ENCODE measurements at regions of chr6 and their contacts with region 1.

Region 1: DNA sequence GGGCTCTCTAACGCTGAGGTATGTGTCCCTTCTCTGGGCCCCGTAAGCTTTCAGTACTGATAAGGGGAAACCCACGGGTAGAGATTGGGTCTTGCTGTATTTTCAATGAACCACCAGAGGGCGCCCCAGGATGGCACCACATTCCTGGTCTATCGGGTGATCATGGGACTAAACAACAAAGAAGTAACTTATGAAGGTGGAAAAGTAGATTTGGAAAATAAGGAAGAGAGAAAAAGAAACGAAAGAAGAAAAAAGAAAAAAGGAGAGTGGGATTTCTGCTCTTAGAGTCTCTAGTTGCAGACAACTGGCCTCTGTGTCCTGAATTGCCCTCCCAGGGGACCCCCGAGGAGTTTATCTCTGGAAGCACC is 93.8 kb downstream of the GMPR start:
- DNase-seq: peak; percentile 83 to 96
- H3K4me3 ChIP-seq: no peak overlapping the region
- CTCF ChIP-seq: peak in 1 of 3 donors; percentile 62
- POLR2A ChIP-seq: no peak

Region 2: DNA sequence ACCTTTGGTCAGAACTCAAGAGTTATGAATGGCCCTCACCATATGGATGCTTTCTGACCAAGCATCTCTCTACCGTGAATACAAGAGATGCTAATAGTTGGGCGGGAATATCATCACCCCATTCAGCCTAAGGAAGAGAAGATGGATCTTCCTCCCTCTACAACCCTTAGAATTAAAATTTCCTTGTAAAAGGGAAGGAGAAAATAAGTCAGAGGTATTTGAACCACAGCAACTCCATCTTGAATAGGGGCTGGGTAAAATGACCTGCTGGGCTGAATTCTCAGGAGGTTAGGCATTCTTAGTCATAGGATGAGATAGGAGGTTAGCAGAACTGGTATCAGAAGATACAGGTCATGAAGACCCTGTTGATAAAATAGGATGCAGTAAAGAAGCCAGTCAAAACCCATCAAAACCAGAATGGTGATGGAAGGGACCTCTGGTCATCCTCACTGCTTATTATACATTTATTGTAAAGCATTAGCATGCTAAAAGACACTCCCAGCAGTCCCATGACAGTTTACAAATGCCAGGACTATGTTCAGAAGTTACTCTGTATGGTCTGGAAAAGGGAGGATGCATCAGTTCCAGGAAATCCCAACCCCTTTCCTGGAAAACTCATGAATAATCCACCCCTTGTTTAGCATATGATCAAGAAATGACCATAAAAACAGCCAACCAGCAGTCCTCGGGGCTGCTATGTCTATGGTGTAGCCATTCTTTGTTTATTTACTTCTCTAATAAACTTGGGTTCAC is 770.5 kb before region 1 on chr6:
- intact Hi-C with region 1: no loop called
- DNase-seq: no peak
- H3K4me3 ChIP-seq: no peak overlapping the region
- CTCF ChIP-seq: no peak
- POLR2A ChIP-seq: no peak

Region 3: DNA sequence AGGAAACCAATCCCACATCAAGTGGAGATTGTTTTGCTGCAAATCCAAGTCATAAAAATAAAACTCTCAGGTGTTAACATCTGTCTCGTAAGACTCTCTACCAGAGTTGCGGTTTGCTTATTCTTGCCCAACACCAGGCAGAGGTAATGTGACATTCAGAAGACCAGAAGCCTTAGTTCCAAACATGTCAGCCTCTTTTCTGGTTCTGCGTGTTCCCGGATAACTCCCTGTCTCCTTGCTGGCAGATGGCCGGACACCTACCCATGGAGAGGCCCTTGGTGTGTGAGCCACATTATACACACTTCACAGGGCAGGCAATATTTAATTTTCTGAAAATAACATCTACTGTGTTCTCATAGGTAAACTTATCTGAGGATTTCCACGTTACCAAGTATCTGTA is 20.4 kb before region 1 on chr6:
- intact Hi-C with region 1: no loop called
- DNase-seq: no peak
- H3K4me3 ChIP-seq: no peak overlapping the region
- CTCF ChIP-seq: no peak
- POLR2A ChIP-seq: no peak

Region 4: GRCh38 chr6:16409531-16410441 is 77.6 kb after region 1 on chr6:
- intact Hi-C with region 1: loop called (anchors 10 kb)
- DNase-seq: peak; percentile 71 to 93
- H3K4me3 ChIP-seq: no peak overlapping the region
- CTCF ChIP-seq: peak in 1 of 3 donors; percentile 45
- POLR2A ChIP-seq: no peak

Region 5: GRCh38 chr6:16769131-16769985 is 437.2 kb after region 1 on chr6:
- intact Hi-C with region 1: loop called (anchors 5 kb)
- DNase-seq: peak; percentile 60 to 70
- H3K4me3 ChIP-seq: no peak overlapping the region
- CTCF ChIP-seq: no peak
- POLR2A ChIP-seq: no peak

Region 6: GRCh38 chr6:16964553-16965501 is 632.7 kb after region 1 on chr6:
- intact Hi-C with region 1: loop called (anchors 10 kb)
- DNase-seq: peak; percentile 63 to 92
- H3K4me3 ChIP-seq: no peak overlapping the region
- CTCF ChIP-seq: peak in 1 of 3 donors; percentile 41
- POLR2A ChIP-seq: no peak

Region 7: DNA sequence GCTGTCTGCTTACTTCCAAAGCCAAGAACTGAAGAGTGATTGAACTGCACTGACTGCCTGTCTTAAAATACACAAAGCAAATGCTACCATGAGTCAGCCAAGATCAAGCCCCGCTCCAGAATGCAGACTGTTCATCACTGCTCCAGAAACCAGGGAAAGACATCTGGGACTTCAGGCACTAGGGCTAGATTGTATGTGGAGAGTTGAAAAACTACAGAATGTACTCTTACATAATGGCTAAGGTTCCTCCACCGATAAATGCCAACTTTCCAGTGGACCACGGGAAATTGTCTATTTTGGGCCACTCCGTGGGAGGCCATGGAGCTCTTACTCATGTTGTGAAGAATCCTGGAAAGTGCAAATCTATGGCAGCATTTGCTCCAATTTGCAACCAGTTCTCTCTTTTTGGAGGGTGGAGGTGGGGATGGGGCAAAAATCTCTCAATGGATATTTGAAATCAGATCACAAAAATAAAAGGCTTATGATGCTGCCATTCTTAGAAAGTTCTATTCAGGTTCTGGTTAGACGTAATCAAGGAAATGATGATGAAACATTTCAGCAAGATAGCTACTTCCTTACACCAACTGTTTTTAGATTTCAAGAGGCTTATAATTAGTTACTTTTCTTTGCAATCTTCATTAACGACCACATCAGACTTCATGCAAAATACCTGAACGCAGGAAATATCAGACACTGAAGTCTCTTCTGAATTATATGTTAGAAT is 1049.4 kb after region 1 on chr6:
- intact Hi-C with region 1: no loop called
- DNase-seq: no peak
- H3K4me3 ChIP-seq: no peak overlapping the region
- CTCF ChIP-seq: no peak
- POLR2A ChIP-seq: no peak